Common myeloid progenitor, CD34-positive (primary cell): ENCODE measurements at regions of chr5 and their contacts with region 1.

Region 1: DNA sequence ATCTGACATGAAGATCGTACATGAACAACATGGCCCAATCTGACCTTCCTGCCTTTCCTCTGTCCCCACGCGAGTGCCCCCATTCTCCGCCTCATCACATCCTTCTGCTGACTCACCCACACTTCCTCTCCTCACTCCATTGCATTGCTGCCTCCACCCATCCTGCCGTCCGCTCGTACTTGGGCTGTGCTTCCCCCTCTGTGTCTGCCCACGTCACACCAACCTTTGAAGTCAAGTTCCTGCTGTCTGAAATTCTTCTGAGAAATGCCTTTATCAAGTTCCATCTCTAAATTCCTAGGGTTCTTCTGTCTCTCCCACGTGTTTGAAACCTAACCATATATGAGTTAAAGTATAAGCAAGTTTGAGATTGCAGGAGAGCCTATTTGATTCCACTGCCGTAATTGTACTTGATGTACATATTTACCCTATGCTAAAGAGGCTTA is 18.0 kb upstream of the STARD4 start:
- DNase-seq: peak; percentile 89 to 97 (median 94)
- H3K4me3 ChIP-seq: peak overlapping the region in 3 of 7 experiments; percentile 4 to 22 (median 19)
- H3K27ac ChIP-seq: peak overlapping the region; percentile 50 to 77
- H3K4me1 ChIP-seq: peaks cover 2 to 15% (median 8%) of the 10 kb centered on the region in 4 experiments
- H3K27me3 ChIP-seq: no peaks in the 10 kb centered on the region

Region 2: DNA sequence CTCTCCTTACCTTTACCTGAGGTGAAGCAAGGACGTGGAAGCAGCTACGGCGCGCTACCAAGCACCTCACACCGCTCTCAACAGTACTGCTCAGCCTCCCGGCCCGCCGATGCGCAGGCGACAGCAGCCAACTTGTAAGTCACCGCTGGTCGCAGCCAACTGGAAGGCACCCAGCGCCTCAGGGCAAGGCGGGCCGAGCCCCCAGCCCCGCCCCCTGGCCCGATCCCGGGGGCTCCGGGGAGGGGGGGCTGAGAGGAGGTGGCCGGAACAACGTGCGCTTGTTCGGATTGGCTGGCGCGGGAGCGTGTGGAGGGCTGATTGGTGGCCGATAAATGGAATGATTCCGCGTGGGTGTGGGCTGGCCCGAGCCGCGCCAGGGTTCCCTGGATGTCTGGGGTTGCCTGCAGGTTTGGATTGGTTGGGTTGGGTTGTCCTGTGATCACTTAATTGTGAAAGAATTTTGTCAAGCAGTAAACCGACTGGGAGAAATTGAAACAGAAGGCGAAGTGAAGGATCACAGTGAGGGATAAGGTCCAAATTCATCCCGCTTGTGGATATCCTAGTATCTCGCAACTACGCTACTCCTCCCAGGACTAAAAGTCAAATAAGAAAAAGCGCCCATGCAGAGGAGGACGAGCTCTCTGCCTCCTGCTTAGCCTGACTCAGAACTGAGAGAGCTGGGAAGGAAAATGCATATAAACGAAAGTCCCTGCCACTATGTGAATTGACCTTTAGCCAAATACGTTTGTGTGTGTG is 17.8 kb before region 1 on chr5 and contains the start of gene STARD4:
- CTCF ChIA-PET with region 1: interaction called, 34 read pairs
- POLR2A ChIA-PET with region 1: interaction called, 8 read pairs
- DNase-seq: peak; percentile 96 to 98 (median 97)
- H3K4me3 ChIP-seq: peak within 1 kb of the TSS; percentile 80 to 96 (median 94)
- H3K27ac ChIP-seq: peak within 1 kb of the TSS; percentile 88 to 96
- H3K4me1 ChIP-seq: peaks cover 5 to 38% (median 13%) of the 10 kb centered on the region in 4 experiments
- H3K27me3 ChIP-seq: no peaks in the 10 kb centered on the region

Region 3: DNA sequence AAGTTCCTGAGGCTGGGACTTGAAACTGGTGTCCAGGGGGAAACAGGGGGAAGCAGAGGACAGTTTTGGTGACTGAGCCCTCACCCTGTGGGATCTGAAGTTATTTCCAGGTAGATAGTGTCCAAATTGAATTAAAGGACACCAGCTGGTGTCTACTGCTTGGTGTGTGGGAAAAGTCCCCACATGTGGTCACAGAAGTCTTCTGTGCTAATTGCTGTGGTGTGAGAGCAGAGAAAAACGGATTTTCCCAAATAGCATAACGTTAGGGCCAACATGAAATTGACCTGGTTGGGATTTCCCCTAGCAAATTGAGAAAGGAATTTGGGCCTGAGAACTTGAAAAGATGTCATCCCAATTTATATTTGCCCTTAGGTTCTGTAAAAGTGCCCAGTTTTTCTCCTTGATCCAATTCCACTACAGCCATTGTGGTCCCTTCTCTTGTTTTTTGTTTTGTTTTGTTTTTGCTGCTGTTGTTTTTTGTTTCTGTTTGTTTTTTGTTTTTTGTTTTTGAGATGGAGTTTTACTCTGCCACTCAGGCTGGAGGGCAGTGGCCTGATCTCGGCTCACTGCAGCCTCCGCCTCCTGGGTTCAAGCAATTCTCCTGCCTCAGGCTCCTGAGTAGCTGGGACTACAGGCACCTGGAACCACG is 12.3 kb before region 1 on chr5:
- CTCF ChIA-PET with region 1: interaction called, 34 read pairs
- POLR2A ChIA-PET with region 1: no interaction called
- DNase-seq: no peak
- H3K4me3 ChIP-seq: no peak overlapping the region
- H3K27ac ChIP-seq: no peak overlapping the region
- H3K4me1 ChIP-seq: peaks cover 0 to 14% (median 4%) of the 10 kb centered on the region in 4 experiments
- H3K27me3 ChIP-seq: no peaks in the 10 kb centered on the region